Motor neuron (in vitro differentiated cells): ENCODE measurements at regions of chr11 and their contacts with region 1.

Region 1: DNA sequence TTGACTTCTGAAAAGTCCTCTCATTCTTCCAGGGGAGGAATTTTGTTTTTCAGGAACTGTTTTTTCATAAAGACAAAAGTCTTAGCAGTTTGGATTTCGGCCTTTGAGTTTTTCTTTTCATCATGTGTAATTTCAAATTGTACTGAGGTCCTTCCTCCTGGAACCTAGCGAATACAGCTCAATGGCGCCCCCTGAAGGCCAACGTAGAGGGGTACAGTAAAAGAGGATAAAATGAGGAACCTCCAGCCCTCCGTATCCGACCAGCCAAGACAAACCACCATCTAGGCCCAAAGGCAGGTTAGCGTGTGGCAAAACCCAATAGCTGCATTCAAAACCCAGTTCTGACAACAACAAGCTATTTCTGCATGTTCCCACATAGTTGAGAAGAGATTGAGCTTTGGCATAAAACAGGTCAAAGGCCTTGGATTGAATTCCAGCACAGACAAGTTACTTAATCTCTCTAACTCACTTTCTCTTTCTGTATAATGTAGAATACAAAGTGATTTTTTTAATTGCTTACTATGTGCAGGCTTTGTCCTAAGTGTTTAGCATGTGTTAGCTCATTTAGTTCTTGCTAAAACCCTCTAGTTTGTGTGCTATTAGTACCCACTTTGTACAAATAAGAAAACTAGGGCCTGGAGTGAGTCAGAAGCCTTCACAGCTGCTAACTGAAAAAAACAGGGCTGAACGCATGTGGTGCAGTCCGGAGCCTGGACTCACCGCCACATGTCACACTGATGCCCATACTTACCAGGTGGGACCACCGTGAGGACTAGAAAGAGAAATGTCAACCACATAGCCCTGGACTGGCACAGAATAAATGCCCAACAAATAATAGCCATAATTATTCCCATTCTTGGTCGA is 43.2 kb upstream of the ETS1 start:
- ATAC-seq: peak; percentile 72 to 98 (median 84)
- H3K4me3 ChIP-seq: no peak overlapping the region
- H3K27ac ChIP-seq: no peak overlapping the region
- H3K4me1 ChIP-seq: peaks cover 4 to 10% of the 10 kb centered on the region in 2 donors

Region 2: GRCh38 chr11:128039140-128040021 is 591.2 kb before region 1 on chr11:
- in situ Hi-C with region 1: loop called in 1 of 9 experiments (anchors 25 kb)
- ATAC-seq: peak in 3 of 8 experiments; percentile 49 to 100 (median 100)
- H3K4me3 ChIP-seq: no peak overlapping the region
- H3K27ac ChIP-seq: no peak overlapping the region
- H3K4me1 ChIP-seq: peaks cover 4 to 5% of the 10 kb centered on the region in 2 donors

Region 3: GRCh38 chr11:128164080-128164741 is 466.4 kb before region 1 on chr11:
- in situ Hi-C with region 1: loop called in 1 of 9 experiments (anchors 10 kb)
- ATAC-seq: peak in 5 of 8 experiments; percentile 74 to 90 (median 81)
- H3K4me3 ChIP-seq: no peak overlapping the region
- H3K27ac ChIP-seq: no peak overlapping the region
- H3K4me1 ChIP-seq: peaks cover 4 to 5% of the 10 kb centered on the region in 2 donors

Region 4: GRCh38 chr11:128172046-128172878 is 458.3 kb before region 1 on chr11:
- in situ Hi-C with region 1: loop called in 7 of 9 experiments (anchors 10 to 25 kb)
- ATAC-seq: peak; percentile 63 to 83 (median 74)
- H3K4me3 ChIP-seq: no peak overlapping the region
- H3K27ac ChIP-seq: no peak overlapping the region
- H3K4me1 ChIP-seq: peaks cover 3 to 8% of the 10 kb centered on the region in 2 donors

Region 5: DNA sequence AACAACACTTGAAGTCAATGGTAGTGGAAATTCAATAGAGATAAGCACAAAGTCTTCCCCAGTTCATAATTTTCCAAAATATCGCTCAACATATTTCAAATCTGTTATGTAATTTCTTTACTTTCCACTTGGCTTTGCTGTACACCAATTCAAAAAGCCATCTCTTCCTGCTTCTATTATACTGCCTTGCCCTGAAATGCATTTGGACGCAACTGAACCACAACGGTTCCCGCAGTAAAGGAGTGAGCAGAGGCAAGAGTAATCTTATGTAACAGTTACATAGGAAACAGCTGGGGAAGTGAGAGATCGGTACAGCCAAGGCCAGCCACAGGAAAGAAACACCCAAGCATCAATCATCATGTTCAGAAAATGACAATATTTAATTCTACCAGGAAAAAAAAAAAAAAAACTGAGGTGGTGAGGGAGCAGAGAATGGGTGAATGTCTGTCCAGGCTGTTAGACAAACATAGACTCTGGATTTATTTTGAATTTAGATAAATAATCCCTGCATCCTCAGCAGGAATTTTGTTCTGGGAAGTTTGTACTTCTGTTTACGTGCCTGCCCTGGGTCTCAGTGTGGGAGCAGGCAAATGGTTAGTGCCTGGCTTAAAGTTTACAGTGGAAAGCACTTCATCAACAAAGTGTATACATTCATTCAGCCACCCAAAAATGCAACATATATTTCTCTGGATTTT is 435.4 kb before region 1 on chr11:
- in situ Hi-C with region 1: loop called in 2 of 9 experiments (anchors 25 kb)
- ATAC-seq: peak in 1 of 8 experiments; percentile 66
- H3K4me3 ChIP-seq: no peak overlapping the region
- H3K27ac ChIP-seq: no peak overlapping the region
- H3K4me1 ChIP-seq: no peaks in the 10 kb centered on the region

Region 6: GRCh38 chr11:128290106-128290840 is 340.3 kb before region 1 on chr11:
- in situ Hi-C with region 1: loop called in 5 of 9 experiments (anchors 10 to 25 kb)
- ATAC-seq: peak; percentile 80 to 96 (median 87)
- H3K4me3 ChIP-seq: no peak overlapping the region
- H3K27ac ChIP-seq: no peak overlapping the region
- H3K4me1 ChIP-seq: peaks cover 11 to 14% of the 10 kb centered on the region in 2 donors

Region 7: DNA sequence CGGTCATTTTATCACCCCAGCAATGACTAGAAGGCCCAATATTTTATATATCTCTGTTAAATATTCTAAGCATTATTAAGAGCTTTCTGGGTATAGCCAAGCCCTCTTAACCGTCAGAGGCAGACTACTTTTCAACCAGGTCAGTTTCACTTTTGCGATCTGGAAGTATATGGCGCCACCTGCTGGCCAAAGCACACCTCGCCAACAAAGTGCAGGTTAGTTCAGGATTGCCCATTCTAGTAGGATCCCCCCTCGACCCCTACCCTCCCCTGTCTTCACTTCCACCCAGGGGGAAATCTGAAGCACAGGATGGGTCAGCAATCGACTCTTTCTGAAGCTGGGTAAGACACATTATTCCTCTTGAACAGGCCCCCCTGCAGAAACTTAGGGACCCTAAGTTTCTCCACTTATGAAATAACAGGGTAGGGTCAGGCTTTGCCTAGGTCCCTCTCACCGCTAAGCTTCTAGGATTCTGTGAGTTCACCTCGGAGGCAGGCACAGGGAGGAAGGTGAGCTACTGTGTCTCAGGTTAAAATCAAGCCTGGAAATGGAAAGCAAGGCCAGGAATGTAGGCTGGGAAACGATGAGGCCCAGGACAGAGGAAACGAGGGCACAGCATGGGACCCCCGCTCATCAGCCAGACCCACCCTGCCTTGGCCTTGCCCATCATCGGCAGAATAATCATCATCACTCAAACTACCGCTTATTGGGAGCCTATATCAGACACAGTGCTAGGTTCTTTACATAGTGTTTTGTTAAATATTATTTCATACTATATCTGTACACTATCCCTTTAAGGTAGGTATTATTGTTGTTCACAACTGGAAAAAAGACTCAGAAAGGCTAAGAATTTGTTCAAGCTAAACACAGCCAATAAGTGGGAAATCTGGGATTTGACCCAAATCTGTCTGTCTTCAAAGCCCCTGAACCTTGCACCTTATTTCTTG is 200.8 kb after region 1 on chr11:
- in situ Hi-C with region 1: loop called in 2 of 9 experiments (anchors 25 kb)
- ATAC-seq: peak; percentile 53 to 96 (median 80)
- H3K4me3 ChIP-seq: no peak overlapping the region
- H3K27ac ChIP-seq: no peak overlapping the region
- H3K4me1 ChIP-seq: no peaks in the 10 kb centered on the region